Naive thymus-derived CD4-positive, alpha-beta T cell (primary cell): ENCODE measurements at regions of chr3 and their contacts with region 1.

Region 1: DNA sequence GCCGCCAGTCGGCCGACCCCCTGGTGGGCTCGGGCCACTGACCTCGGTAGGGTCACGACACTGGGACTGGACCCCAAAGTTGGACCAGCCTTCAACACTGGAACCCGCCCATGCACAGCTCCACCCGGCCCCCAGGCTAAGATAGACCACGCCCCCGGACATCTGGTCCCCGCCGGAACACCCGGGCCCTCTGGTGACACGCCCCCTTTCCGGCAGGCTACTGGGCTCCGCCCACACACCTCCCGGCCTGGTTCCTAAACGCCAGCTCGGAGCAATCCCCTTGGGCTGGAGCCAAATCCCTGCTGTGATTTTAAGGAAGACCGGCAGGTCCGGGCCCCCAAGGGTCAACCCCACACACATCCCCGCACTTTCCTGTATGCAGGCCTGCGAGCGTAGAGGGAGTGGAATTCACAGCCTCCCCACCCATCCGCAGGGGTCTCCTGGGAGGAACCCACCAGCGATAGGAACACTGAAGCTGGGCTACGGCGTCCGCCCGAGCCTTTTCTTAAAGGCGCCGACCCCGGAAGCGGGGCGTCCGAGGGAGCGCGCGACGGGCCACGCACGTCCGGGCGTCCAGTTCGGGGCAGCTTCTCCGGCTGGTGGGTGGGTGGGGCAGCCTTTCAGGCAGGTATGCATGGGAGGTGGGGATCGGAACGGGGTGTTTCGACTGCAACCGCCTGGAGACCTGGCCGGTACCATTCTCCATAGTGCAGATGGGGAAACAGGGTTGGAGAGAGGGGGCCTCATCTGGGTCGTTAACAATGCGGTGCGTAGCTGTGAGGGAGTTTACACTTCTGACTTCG is at the start of gene HEMK1:
- DNase-seq: peak; percentile 71 to 95 (median 90)
- ATAC-seq: peak; percentile 81
- H3K4me3 ChIP-seq: peak within 1 kb of the TSS; percentile 97
- H3K4me3 Mint-ChIP-seq: peak within 1 kb of the TSS; percentile 86 to 99 (median 96)
- H3K27ac ChIP-seq: peak within 1 kb of the TSS; percentile 84
- H3K27ac Mint-ChIP-seq: peak within 1 kb of the TSS; percentile 90 to 98 (median 93)
- H3K4me1 ChIP-seq: peaks cover 49 to 57% of the 10 kb centered on the region in 2 donors
- H3K4me1 Mint-ChIP-seq: peaks cover 37 to 75% (median 71%) of the 10 kb centered on the region in 7 donors
- H3K27me3 ChIP-seq: no peaks in the 10 kb centered on the region
- H3K27me3 Mint-ChIP-seq: no peaks in the 10 kb centered on the region
- total RNA-seq, gene HEMK1: 32.1 to 71.1 (median 66.1) TPM

Region 2: GRCh38 chr3:50088725-50089608 is 480.2 kb before region 1 on chr3 and contains the start of gene RBM5:
- CTCF ChIA-PET with region 1: no interaction called
- POLR2A ChIA-PET with region 1: no interaction called
- intact Hi-C with region 1: loop called in 1 of 2 experiments (anchors 5 kb)
- DNase-seq: peak; percentile 71 to 91 (median 89)
- ATAC-seq: peak; percentile 100
- H3K4me3 ChIP-seq: peak within 1 kb of the TSS; percentile 88
- H3K4me3 Mint-ChIP-seq: peak within 1 kb of the TSS; percentile 94 to 98 (median 96)
- H3K27ac ChIP-seq: peak within 1 kb of the TSS; percentile 98
- H3K27ac Mint-ChIP-seq: peak within 1 kb of the TSS; percentile 94 to 99 (median 97)
- H3K4me1 ChIP-seq: peaks cover 16 to 23% of the 10 kb centered on the region in 2 donors
- H3K4me1 Mint-ChIP-seq: peaks cover 24 to 36% (median 32%) of the 10 kb centered on the region in 7 donors
- H3K27me3 ChIP-seq: no peaks in the 10 kb centered on the region
- H3K27me3 Mint-ChIP-seq: no peaks in the 10 kb centered on the region
- total RNA-seq, gene RBM5: 223 to 420 (median 342) TPM

Region 3: DNA sequence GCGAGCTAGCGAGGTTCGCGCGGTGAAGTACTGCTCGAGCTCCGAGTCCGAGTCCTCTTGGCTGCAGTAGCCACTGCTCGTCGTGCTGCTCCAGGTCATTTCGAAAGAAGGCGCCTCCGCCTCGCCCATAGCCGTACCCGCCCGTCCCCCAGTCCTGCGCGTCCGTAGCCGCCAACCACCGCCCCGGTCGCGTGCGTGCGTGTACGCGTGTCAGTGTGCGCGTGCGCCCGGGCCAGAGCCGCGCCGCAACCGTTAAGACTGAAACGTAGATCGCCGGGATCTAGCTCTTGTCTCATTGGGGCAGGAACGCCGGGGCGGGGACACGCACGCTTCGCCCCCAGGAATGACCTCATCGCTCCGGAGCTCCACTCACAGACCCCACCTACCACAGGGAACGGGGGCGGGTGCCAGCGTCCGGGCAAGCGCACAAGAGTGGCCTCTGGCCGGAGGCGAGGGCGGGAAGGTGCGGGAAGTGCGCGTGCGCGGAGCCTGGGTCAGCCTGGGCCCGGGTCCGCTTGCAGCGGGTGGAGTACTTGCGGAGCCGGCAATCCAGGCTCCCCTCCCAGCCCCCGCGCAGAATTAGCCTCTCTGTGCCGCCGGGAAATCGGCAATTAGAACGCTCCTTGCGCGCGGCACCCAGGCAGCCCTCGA is 231.8 kb before region 1 on chr3:
- CTCF ChIA-PET with region 1: no interaction called
- POLR2A ChIA-PET with region 1: interaction called, 18 read pairs
- intact Hi-C with region 1: loop called in 1 of 2 experiments (anchors 2 kb)
- DNase-seq: peak; percentile 83 to 98 (median 91)
- ATAC-seq: peak; percentile 88
- H3K4me3 ChIP-seq: peak overlapping the region; percentile 83
- H3K4me3 Mint-ChIP-seq: peak overlapping the region; percentile 92 to 97 (median 95)
- H3K27ac ChIP-seq: peak overlapping the region; percentile 92
- H3K27ac Mint-ChIP-seq: peak overlapping the region; percentile 92 to 97 (median 96)
- H3K4me1 ChIP-seq: peaks cover 43 to 58% of the 10 kb centered on the region in 2 donors
- H3K4me1 Mint-ChIP-seq: peaks cover 35 to 73% (median 68%) of the 10 kb centered on the region in 7 donors
- H3K27me3 ChIP-seq: no peaks in the 10 kb centered on the region
- H3K27me3 Mint-ChIP-seq: peaks cover 0 to 3% (median 0%) of the 10 kb centered on the region in 5 donors

Region 4: DNA sequence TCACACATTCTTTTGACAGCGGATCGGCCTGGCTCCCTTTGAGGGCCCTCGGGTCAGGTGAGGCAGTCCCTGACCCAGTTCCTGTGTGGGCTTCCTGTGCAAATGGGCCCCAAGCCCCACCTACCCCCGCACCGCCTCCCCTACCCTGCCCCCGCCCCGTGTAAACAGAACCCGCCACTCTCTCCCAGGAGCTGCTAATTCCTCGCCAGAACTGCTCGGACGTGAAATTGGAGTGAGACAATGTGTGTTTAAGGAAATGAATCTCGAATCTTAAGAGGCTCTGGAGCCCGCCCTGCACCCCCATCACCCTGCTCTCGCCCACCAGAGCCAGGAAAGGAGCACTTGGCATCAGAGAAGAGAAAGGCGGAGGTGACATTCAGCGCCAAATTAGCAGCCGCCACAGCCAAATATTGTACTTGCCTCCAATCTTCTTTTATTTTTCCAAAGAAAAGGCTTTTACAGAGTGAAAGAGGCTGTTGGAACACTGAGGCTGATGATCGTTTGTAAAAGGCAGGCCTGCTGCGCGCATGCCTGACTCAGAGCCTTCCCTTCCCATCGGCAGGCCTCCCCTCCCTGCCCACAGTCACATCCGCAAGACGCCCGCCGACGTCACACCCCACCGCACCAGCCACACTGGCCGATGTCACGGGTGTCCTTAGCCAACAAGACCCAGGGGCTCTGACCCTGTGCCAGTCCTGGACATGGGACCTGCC is 118.8 kb before region 1 on chr3:
- CTCF ChIA-PET with region 1: no interaction called
- POLR2A ChIA-PET with region 1: no interaction called
- intact Hi-C with region 1: loop called in 1 of 2 experiments (anchors 5 kb)
- DNase-seq: peak; percentile 57 to 75 (median 66)
- ATAC-seq: peak; percentile 86
- H3K4me3 ChIP-seq: peak overlapping the region; percentile 60
- H3K4me3 Mint-ChIP-seq: peak overlapping the region; percentile 82 to 91 (median 86)
- H3K27ac ChIP-seq: peak overlapping the region; percentile 81
- H3K27ac Mint-ChIP-seq: peak overlapping the region; percentile 85 to 98 (median 96)
- H3K4me1 ChIP-seq: peaks cover 13 to 16% of the 10 kb centered on the region in 2 donors
- H3K4me1 Mint-ChIP-seq: peaks cover 10 to 33% (median 28%) of the 10 kb centered on the region in 7 donors
- H3K27me3 ChIP-seq: no peaks in the 10 kb centered on the region
- H3K27me3 Mint-ChIP-seq: no peaks in the 10 kb centered on the region

Region 5: GRCh38 chr3:50580683-50581458 is 11.7 kb after region 1 on chr3:
- CTCF ChIA-PET with region 1: interaction called, 94 read pairs
- POLR2A ChIA-PET with region 1: interaction called, 130 read pairs
- intact Hi-C with region 1: no loop called
- DNase-seq: peak in 1 of 9 donors; percentile 32
- ATAC-seq: peak; percentile 56
- H3K4me3 ChIP-seq: peak overlapping the region; percentile 12
- H3K4me3 Mint-ChIP-seq: peak overlapping the region in 4 of 10 donors; percentile 1 to 52 (median 32)
- H3K27ac ChIP-seq: peak overlapping the region; percentile 42
- H3K27ac Mint-ChIP-seq: peak overlapping the region; percentile 47 to 91 (median 68)
- H3K4me1 ChIP-seq: peaks cover 24% of the 10 kb centered on the region in 2 donors
- H3K4me1 Mint-ChIP-seq: peaks cover 14 to 74% (median 28%) of the 10 kb centered on the region in 7 donors
- H3K27me3 ChIP-seq: no peaks in the 10 kb centered on the region
- H3K27me3 Mint-ChIP-seq: no peaks in the 10 kb centered on the region

Region 6: DNA sequence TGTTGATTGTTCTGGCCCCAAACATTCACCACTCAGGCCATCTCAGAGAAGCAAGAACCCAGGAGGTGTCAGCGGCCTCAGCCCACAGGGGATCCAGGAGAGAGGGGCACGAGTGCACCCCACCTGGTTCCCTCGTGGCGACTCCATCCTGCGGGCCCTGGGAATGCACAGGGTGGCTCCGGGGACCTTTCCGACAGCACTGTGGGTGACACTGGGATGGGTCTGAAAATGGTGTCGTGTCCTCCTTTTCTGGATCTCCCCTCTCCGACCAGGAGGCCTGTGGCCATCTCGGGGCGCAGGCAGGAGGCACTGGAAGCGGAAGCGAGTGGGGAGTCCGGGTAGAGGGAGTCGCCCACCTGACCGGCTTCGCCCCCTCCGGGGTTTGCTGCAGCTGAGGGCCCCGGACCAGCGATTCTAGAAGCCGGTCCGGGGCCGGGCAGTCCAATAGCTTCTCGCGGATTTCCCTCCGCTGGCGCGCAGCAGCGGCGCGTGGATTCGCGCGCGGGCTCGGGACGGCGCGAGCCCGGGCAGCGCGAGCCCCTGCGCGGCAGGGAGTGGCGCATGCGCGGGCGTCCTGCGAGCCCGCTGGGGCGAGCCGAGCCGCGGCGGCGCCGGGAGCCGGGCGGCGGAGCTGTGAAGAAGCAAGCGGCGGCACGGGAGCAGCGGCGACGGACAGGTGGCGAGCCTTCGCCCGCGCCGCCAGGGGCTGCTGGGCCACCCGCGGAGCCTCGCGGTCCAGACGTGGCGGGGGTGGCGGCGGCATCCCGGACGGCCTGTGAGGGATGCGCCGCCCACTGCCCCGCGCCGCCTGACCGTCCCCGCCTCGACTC is 105.4 kb after region 1 on chr3 and contains the start of gene DOCK3:
- CTCF ChIA-PET with region 1: interaction called, 5 read pairs
- POLR2A ChIA-PET with region 1: no interaction called
- intact Hi-C with region 1: loop called in 1 of 2 experiments (anchors 5 kb)
- DNase-seq: peak; percentile 30 to 77 (median 69)
- ATAC-seq: peak; percentile 92
- H3K4me3 ChIP-seq: peak within 1 kb of the TSS; percentile 63
- H3K4me3 Mint-ChIP-seq: peak within 1 kb of the TSS; percentile 71 to 87 (median 81)
- H3K27ac ChIP-seq: no peak within 1 kb of the TSS
- H3K27ac Mint-ChIP-seq: peak within 1 kb of the TSS in 4 of 9 donors; percentile 4 to 58 (median 40)
- H3K4me1 ChIP-seq: no peaks in the 10 kb centered on the region
- H3K4me1 Mint-ChIP-seq: peaks cover 4 to 10% (median 6%) of the 10 kb centered on the region in 7 donors
- H3K27me3 ChIP-seq: peaks cover 0 to 3% of the 10 kb centered on the region in 2 donors
- H3K27me3 Mint-ChIP-seq: peaks cover 17 to 65% (median 32%) of the 10 kb centered on the region in 5 donors
- total RNA-seq, gene DOCK3: 1.5 to 2.9 (median 1.9) TPM

Region 7: DNA sequence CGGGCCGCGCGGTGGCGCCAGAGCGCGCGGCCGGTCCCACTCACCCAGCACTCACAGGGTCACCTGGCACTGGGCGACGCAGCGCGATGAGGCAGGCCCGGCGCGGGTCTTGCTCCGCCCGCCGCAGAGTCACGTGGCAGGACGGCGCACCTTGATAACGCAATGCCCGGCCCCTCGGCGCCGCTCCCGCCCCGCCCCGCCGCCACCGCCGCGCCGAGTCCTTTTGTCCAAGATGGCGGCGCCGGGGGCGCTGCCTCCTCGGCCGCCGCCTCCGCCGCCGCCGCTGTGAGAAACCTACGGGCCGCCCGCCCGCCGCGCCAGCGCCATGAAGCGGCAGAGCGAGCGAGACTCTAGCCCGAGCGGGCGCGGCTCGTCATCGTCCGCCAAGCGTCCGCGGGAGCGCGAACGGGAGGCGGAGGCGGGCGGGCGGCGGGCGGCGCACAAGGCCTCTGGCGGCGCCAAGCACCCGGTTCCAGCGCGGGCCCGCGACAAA is 822.0 kb after region 1 on chr3 and contains the start of gene RBM15B:
- CTCF ChIA-PET with region 1: interaction called, 3 read pairs
- POLR2A ChIA-PET with region 1: interaction called, 5 read pairs
- intact Hi-C with region 1: loop called in 1 of 2 experiments (anchors 1 kb)
- DNase-seq: peak; percentile 94 to 98 (median 96)
- ATAC-seq: peak; percentile 95
- H3K4me3 ChIP-seq: peak within 1 kb of the TSS; percentile 52
- H3K4me3 Mint-ChIP-seq: peak within 1 kb of the TSS; percentile 76 to 89 (median 83)
- H3K27ac ChIP-seq: peak within 1 kb of the TSS; percentile 90
- H3K27ac Mint-ChIP-seq: peak within 1 kb of the TSS; percentile 79 to 91 (median 88)
- H3K4me1 ChIP-seq: peaks cover 46 to 53% of the 10 kb centered on the region in 2 donors
- H3K4me1 Mint-ChIP-seq: peaks cover 35 to 75% (median 67%) of the 10 kb centered on the region in 7 donors
- H3K27me3 ChIP-seq: no peaks in the 10 kb centered on the region
- H3K27me3 Mint-ChIP-seq: no peaks in the 10 kb centered on the region
- total RNA-seq, gene RBM15B: 29.9 to 40.6 (median 31.3) TPM